ENCODE measurements at regions of chr9 and their contacts with region 1.

Region 1: DNA sequence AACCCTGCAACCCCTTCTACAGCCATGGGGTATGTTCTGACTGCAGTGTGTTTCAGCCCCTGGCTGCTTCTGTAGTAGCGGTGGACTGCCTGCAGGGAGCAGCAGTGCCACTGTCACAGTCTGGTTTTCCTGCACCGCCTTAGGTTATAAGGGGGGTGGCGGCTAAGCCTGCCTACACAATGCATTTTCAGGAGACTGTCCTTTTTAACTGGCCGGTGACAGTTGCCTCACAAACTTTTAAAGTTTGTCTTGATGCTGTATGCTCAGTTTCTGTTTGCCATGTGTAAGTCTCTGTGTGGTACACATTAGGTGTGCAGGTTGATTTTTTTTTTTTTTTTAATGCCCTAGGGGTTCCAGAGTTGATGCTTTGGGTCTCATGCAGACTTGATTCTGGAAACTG is 53.0 kb downstream of the NUP214 start:
- DNase-seq: peak; percentile 100
- ATAC-seq: peak; percentile 96
- H3K4me3 ChIP-seq: no peak overlapping the region
- H3K27ac ChIP-seq: no peak overlapping the region
- H3K4me1 ChIP-seq: peaks cover 11 to 29% of the 10 kb centered on the region in 2 experiments; a peak in 4 of 5 replicates
- H3K27me3 ChIP-seq: no peaks in the 10 kb centered on the region
- CTCF ChIP-seq: no peak
- EP300 ChIP-seq: no peak
- POLR2A ChIP-seq: no peak
- RAD21 ChIP-seq: no peak

Region 2: GRCh38 chr9:131028221-131028884 is 150.0 kb before region 1 on chr9:
- CTCF ChIA-PET with region 1: no interaction called
- POLR2A ChIA-PET with region 1: no interaction called
- in situ Hi-C with region 1: no loop called
- intact Hi-C with region 1: no loop called
- DNase-seq: peak in 3 of 4 experiments; percentile 61 to 70 (median 64)
- ATAC-seq: peak; percentile 1; the same call in 1 of the 3 replicates
- H3K4me3 ChIP-seq: no peak overlapping the region
- H3K27ac ChIP-seq: no peak overlapping the region
- H3K4me1 ChIP-seq: peaks cover 0 to 20% of the 10 kb centered on the region in 2 experiments; a peak in 3 of 5 replicates
- H3K27me3 ChIP-seq: peaks cover 92 to 96% of the 10 kb centered on the region in 2 experiments
- CTCF ChIP-seq: no peak
- EP300 ChIP-seq: no peak
- POLR2A ChIP-seq: no peak
- RAD21 ChIP-seq: no peak

Region 3: GRCh38 chr9:131053896-131054295 is 124.5 kb before region 1 on chr9:
- CTCF ChIA-PET with region 1: interaction called, 13 read pairs
- POLR2A ChIA-PET with region 1: interaction called, 4 read pairs
- in situ Hi-C with region 1: no loop called
- intact Hi-C with region 1: loop called (anchors 1 kb)
- DNase-seq: no peak
- ATAC-seq: no peak
- H3K4me3 ChIP-seq: no peak overlapping the region
- H3K27ac ChIP-seq: no peak overlapping the region
- H3K4me1 ChIP-seq: peaks cover 0 to 15% of the 10 kb centered on the region in 2 experiments; a peak in 2 of 5 replicates
- H3K27me3 ChIP-seq: peaks cover 70 to 87% of the 10 kb centered on the region in 2 experiments
- CTCF ChIP-seq: no peak
- EP300 ChIP-seq: no peak
- POLR2A ChIP-seq: no peak
- RAD21 ChIP-seq: no peak

Region 4: DNA sequence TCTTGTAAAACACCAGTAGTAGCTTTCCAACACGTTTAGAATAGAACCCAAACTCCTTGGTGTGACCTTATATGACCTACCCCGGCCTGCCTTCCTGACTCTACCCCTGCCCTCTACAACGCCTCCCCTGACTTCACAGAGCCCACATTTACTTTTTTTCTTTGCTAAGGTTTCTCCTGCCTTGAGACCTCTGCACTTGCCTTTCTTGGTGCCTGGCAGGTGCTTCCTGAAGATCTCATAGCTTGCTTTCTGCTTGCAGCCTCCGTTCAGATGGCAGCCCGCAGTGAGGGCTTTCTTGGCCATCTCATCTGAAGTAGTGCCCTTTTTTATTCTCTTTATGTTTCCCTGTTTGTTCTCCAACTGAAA is 28.7 kb before region 1 on chr9:
- CTCF ChIA-PET with region 1: no interaction called
- POLR2A ChIA-PET with region 1: interaction called, 17 read pairs
- in situ Hi-C with region 1: no loop called
- intact Hi-C with region 1: no loop called
- DNase-seq: peak in 1 of 4 experiments; percentile 63
- ATAC-seq: peak; percentile 2; the same call in 2 of the 3 replicates
- H3K4me3 ChIP-seq: no peak overlapping the region
- H3K27ac ChIP-seq: peak overlapping the region; percentile 1; the same call in 2 of the 3 replicates
- H3K4me1 ChIP-seq: no peaks in the 10 kb centered on the region
- H3K27me3 ChIP-seq: no peaks in the 10 kb centered on the region
- CTCF ChIP-seq: no peak
- EP300 ChIP-seq: no peak
- POLR2A ChIP-seq: no peak
- RAD21 ChIP-seq: no peak

Region 5: DNA sequence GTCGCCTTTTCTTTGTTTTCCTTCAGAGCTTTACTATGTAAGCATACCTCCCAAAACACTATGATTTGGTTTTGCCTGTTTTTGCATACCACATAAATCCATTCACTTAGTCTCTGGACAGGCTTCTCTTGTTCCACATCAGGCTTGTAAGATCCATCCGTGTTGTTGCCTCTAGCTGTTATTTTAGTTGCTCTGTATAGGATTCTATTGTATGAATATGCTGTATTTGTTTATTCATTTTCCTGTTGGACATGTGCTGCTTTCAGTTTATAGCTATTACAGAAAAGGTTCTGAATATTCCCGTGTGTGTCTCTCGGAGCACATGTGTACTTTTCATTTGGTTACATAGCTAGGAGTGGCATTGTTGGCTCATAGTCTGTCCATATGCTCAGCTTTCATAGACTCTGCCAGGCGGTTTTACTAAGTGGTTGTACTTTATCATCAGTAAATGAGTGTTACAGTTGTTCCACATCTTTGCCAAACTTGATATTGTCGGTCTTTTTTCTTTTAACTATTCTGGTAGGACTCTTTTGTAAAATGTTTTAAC is 11.2 kb before region 1 on chr9:
- CTCF ChIA-PET with region 1: interaction called, 3 read pairs
- POLR2A ChIA-PET with region 1: interaction called, 161 read pairs
- in situ Hi-C with region 1: no loop called
- intact Hi-C with region 1: no loop called
- DNase-seq: peak in 1 of 4 experiments; percentile 48
- ATAC-seq: peak; percentile 33
- H3K4me3 ChIP-seq: no peak overlapping the region
- H3K27ac ChIP-seq: no peak overlapping the region
- H3K4me1 ChIP-seq: no peaks in the 10 kb centered on the region
- H3K27me3 ChIP-seq: no peaks in the 10 kb centered on the region
- CTCF ChIP-seq: no peak
- EP300 ChIP-seq: no peak
- POLR2A ChIP-seq: no peak
- RAD21 ChIP-seq: no peak

Region 6: DNA sequence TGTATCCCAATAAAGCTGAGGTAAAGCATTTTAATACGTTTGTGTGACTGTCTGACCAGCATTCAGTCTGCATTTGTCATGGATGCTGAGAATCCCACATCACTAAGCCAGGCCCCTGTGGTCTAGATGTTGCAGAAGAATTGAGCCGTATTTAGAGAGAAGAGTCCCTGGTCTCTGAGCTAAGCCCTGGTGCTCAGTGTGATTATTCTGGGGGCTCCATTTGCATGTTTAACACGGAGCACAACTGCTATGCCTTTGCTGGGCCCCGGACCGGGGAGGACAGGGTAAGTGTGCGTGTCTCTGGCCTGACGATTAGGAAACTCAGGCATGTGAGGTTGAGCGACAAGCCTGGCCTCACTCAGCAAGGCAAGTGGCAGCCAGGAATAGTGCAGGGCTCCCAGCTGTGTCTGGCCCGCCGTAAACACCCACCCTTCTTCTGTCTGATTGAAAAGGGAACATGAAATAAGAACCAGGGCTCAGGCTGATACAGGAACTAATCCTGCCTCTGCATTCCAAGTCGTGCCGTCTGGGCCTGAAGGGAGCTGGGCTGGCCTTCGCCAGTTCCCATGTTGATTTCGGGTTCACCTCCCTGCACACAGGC is 75.6 kb after region 1 on chr9:
- CTCF ChIA-PET with region 1: no interaction called
- POLR2A ChIA-PET with region 1: interaction called, 10 read pairs
- in situ Hi-C with region 1: no loop called
- intact Hi-C with region 1: no loop called
- DNase-seq: no peak
- ATAC-seq: peak; percentile 1; the same call in 1 of the 3 replicates
- H3K4me3 ChIP-seq: no peak overlapping the region
- H3K27ac ChIP-seq: no peak overlapping the region
- H3K4me1 ChIP-seq: peaks cover 12 to 29% of the 10 kb centered on the region in 2 experiments
- H3K27me3 ChIP-seq: peaks cover 0 to 7% of the 10 kb centered on the region in 2 experiments; a peak in 1 of 5 replicates
- CTCF ChIP-seq: no peak
- EP300 ChIP-seq: no peak
- POLR2A ChIP-seq: no peak
- RAD21 ChIP-seq: no peak

Region 7: GRCh38 chr9:131277910-131278701 is 99.7 kb after region 1 on chr9:
- CTCF ChIA-PET with region 1: interaction called, 9 read pairs
- POLR2A ChIA-PET with region 1: interaction called, 10 read pairs
- in situ Hi-C with region 1: no loop called
- intact Hi-C with region 1: loop called (anchors 1 kb)
- DNase-seq: peak; percentile 100
- ATAC-seq: peak; percentile 65
- H3K4me3 ChIP-seq: peak overlapping the region; percentile 65
- H3K27ac ChIP-seq: peak overlapping the region; percentile 75
- H3K4me1 ChIP-seq: peaks cover 28 to 75% of the 10 kb centered on the region in 2 experiments
- H3K27me3 ChIP-seq: peaks cover 3 to 13% of the 10 kb centered on the region in 2 experiments; a peak in 3 of 5 replicates
- CTCF ChIP-seq: no peak; a peak in 1 of 6 replicates
- EP300 ChIP-seq: peak; percentile 40; the same call in 1 of the 2 replicates
- POLR2A ChIP-seq: no peak
- RAD21 ChIP-seq: no peak

Region 8: GRCh38 chr9:132516911-132517310 is 1338.5 kb after region 1 on chr9:
- CTCF ChIA-PET with region 1: no interaction called
- POLR2A ChIA-PET with region 1: no interaction called
- in situ Hi-C with region 1: no loop called
- intact Hi-C with region 1: no loop called
- DNase-seq: no peak
- ATAC-seq: no peak; the same call in 1 of the 3 replicates
- H3K4me3 ChIP-seq: no peak overlapping the region
- H3K27ac ChIP-seq: no peak overlapping the region
- H3K4me1 ChIP-seq: 0 out of 5 replicates have a peak, but pooled peaks cover 0 to 3% of the 10 kb centered on the region in 2 experiments
- H3K27me3 ChIP-seq: peaks cover 38 to 76% of the 10 kb centered on the region in 2 experiments
- CTCF ChIP-seq: no peak
- EP300 ChIP-seq: no peak
- POLR2A ChIP-seq: no peak
- RAD21 ChIP-seq: no peak

Measured in K562 (cell line).